ENCODE measurements at regions of chr1 and their contacts with region 1.

Region 1: GRCh38 chr1:16289963-16290362 is 53.0 kb upstream of the CPLANE2 start:
- DNase-seq: no peak
- H3K4me3 ChIP-seq: no peak overlapping the region
- H3K27ac ChIP-seq: no peak overlapping the region
- H3K4me1 ChIP-seq: peaks cover 0 to 9% (median 0%) of the 10 kb centered on the region in 4 donors
- H3K27me3 ChIP-seq: no peaks in the 10 kb centered on the region
- CTCF ChIP-seq: no peak
- EP300 ChIP-seq: no peak
- POLR2A ChIP-seq: no peak

Region 2: GRCh38 chr1:16351994-16352841 is 62.3 kb after region 1 on chr1 and contains the start of gene FBXO42:
- in situ Hi-C with region 1: no loop called
- intact Hi-C with region 1: loop called (anchors 10 kb)
- DNase-seq: peak; percentile 92
- H3K4me3 ChIP-seq: peak within 1 kb of the TSS; percentile 79 to 90 (median 86)
- H3K27ac ChIP-seq: peak within 1 kb of the TSS; percentile 92 to 95 (median 95)
- H3K4me1 ChIP-seq: peaks cover 12 to 39% (median 15%) of the 10 kb centered on the region in 4 donors
- H3K27me3 ChIP-seq: no peaks in the 10 kb centered on the region
- CTCF ChIP-seq: peak in 3 of 5 experiments; percentile 32 to 50 (median 43)
- EP300 ChIP-seq: no peak
- POLR2A ChIP-seq: peak; percentile 80
- total RNA-seq, gene FBXO42: 15.7 to 25.4 (median 18.8) TPM

Measured in transverse colon (tissue), 4 donors.